Activated CD4-positive, alpha-beta memory T cell treated with anti-CD3 and anti-CD28 coated beads, Interleukin-2, amount 10 ng/mL, durations not matched to agents 7 days and 5 days (primary cell): ENCODE measurements at regions of chr1 and their contacts with region 1.

Region 1: GRCh38 chr1:31938174-31938950 is at the start of gene PTP4A2:
- DNase-seq: peak; percentile 92
- H3K4me3 Mint-ChIP-seq: peak within 1 kb of the TSS; percentile 100
- H3K27ac Mint-ChIP-seq: peak within 1 kb of the TSS; percentile 97
- H3K4me1 Mint-ChIP-seq: peaks cover 78% of the 10 kb centered on the region
- H3K27me3 Mint-ChIP-seq: no peaks in the 10 kb centered on the region
- total RNA-seq, gene PTP4A2: 337 to 349 TPM

Region 2: GRCh38 chr1:31910933-31911332 is 27.4 kb before region 1 on chr1:
- CTCF ChIA-PET with region 1: interaction called, 3 read pairs
- POLR2A ChIA-PET with region 1: interaction called, 14 read pairs
- DNase-seq: no peak
- H3K4me3 Mint-ChIP-seq: no peak overlapping the region
- H3K27ac Mint-ChIP-seq: peak overlapping the region; percentile 61
- H3K4me1 Mint-ChIP-seq: peaks cover 51% of the 10 kb centered on the region
- H3K27me3 Mint-ChIP-seq: no peaks in the 10 kb centered on the region

Region 3: DNA sequence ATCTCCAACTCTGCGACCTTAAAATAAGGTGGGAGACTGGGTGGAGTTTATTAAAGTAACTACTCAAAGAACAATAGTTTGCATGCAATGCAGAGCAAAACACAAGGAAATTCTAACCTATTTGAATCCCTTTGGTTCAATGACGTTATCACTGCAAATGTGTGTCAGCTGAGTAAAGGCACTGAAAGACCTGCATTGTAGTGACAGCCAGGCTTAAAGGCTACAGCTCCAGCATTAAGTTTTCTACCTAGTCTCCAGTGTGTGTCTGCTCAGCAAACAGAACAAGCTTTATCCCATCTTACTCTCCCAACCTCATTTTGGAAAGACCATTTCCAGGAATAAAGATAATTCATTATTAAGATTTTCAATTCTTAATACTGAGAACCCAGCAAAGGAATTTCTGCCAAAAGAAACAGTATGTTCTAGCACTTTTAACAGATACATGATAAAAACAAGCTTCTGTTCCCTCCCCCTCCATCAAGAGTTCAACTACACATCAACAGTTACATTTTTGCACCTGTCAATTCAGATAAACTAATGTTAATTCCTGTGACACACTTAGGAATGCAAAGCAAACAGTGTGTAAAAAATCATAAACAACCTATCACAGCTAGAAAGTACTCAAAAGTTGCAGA is 14.3 kb before region 1 on chr1:
- CTCF ChIA-PET with region 1: interaction called, 35 read pairs
- POLR2A ChIA-PET with region 1: interaction called, 186 read pairs
- DNase-seq: no peak
- H3K4me3 Mint-ChIP-seq: peak overlapping the region; percentile 45
- H3K27ac Mint-ChIP-seq: peak overlapping the region; percentile 76
- H3K4me1 Mint-ChIP-seq: peaks cover 77% of the 10 kb centered on the region
- H3K27me3 Mint-ChIP-seq: no peaks in the 10 kb centered on the region

Region 4: GRCh38 chr1:31955917-31956736 is 17.8 kb after region 1 on chr1:
- CTCF ChIA-PET with region 1: interaction called, 395 read pairs
- POLR2A ChIA-PET with region 1: interaction called, 222 read pairs
- DNase-seq: peak; percentile 87
- H3K4me3 Mint-ChIP-seq: peak overlapping the region; percentile 19
- H3K27ac Mint-ChIP-seq: peak overlapping the region; percentile 69
- H3K4me1 Mint-ChIP-seq: peaks cover 85% of the 10 kb centered on the region
- H3K27me3 Mint-ChIP-seq: no peaks in the 10 kb centered on the region

Region 5: DNA sequence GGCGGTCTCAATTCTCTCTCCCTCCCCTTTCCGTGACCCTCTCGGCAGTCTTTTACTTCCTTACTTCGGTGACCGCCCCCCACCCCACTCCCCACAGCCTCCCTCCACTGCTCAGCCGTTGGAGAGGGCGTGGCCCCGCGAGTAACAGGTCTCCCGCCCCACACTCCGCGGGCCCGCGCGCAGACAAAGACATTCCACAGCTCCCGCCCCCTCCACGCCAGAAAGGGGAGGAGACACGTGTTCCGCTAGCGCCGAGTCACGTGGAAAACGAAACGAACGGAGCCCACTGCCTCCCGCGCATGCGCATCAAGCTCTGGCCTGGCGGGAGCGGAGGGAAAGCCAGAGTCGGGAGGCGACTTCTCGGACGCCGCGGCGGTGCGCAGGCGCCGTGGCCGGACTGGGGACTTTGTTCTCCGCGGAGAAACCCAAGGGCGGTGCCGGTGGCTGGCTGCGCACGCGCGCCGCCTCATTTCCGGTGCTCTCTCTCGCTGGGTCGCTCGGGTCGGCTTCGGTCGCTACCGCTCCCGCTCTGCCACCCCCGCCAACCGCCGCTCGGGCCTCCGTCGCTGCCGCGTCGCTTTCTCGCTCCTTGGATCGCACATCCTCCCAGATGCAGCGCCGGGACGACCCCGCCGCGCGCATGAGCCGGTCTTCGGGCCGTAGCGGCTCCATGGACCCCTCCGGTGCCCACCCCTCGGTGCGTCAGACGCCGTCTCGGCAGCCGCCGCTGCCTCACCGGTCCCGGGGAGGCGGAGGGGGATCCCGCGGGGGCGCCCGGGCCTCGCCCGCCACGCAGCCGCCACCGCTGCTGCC is 75.2 kb after region 1 on chr1 and contains the start of gene KHDRBS1:
- CTCF ChIA-PET with region 1: interaction called, 4 read pairs
- POLR2A ChIA-PET with region 1: interaction called, 34 read pairs
- DNase-seq: peak; percentile 99
- H3K4me3 Mint-ChIP-seq: peak within 1 kb of the TSS; percentile 94
- H3K27ac Mint-ChIP-seq: peak within 1 kb of the TSS; percentile 94
- H3K4me1 Mint-ChIP-seq: peaks cover 30% of the 10 kb centered on the region
- H3K27me3 Mint-ChIP-seq: no peaks in the 10 kb centered on the region
- total RNA-seq, gene KHDRBS1: 168 to 169 TPM